Adrenal gland (tissue), 19 donors: ENCODE measurements at regions of chr7 and their contacts with region 1.

Region 1: GRCh38 chr7:152699121-152699660 is 23.2 kb upstream of the XRCC2 start:
- DNase-seq: no peak
- H3K4me3 ChIP-seq: no peak overlapping the region
- H3K27ac ChIP-seq: no peak overlapping the region
- H3K4me1 ChIP-seq: no peaks in the 10 kb centered on the region
- H3K27me3 ChIP-seq: no peaks in the 10 kb centered on the region
- CTCF ChIP-seq: no peak
- POLR2A ChIP-seq: no peak

Region 2: DNA sequence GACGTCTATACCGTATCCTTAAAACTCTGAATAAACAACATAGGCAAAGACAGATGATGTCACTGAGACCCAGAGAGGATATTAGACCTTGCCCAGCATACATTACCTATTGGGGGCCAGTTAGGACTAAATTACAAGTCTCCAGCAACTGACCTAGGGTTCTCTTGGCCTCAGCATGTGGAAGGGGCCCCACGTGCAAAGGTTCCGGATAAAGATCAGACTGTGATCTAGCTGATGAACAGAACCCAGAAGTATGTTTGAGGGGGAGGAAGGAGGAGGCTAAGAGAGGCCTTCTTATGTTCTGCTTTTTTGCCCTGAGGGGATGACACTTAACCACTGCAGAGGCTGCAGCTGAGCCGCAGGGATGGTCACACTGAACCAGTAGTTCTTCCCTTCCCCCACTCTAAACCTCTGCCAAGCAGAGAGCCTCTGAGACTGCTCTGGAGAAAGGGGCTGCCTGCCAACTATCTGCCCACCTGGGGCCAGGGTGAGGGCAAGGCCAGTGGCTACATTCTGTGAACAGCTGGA is 239.4 kb before region 1 on chr7:
- intact Hi-C with region 1: loop called in 1 of 2 experiments (anchors 10 kb)
- DNase-seq: peak; percentile 43 to 86 (median 70)
- H3K4me3 ChIP-seq: no peak overlapping the region
- H3K27ac ChIP-seq: peak overlapping the region in 3 of 5 donors; percentile 18 to 56 (median 50)
- H3K4me1 ChIP-seq: peaks cover 14 to 20% of the 10 kb centered on the region in 2 donors
- H3K27me3 ChIP-seq: no peaks in the 10 kb centered on the region
- CTCF ChIP-seq: no peak
- POLR2A ChIP-seq: no peak

Region 3: DNA sequence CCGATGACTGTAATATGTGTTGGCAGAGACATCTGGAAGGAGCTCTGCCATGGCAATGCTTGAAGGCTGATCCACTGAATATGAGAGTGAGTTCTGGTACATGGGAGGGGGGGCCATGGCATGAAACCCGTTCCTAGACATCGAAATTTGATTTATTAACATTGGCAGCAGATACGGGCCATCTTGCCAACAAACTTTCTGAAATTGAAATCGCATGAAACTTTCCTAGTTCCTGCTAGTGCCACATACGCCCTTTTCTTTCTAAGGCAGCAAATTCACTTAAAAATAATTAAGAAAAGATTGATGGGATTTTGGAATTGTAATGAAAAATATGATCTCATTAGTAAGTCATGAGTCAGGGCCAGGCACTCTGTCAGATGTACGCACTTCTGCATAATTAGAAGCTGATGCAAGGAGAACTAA is 171.6 kb before region 1 on chr7:
- intact Hi-C with region 1: no loop called
- DNase-seq: peak; percentile 59 to 87 (median 76)
- H3K4me3 ChIP-seq: peak overlapping the region in 1 of 4 donors; percentile 29
- H3K27ac ChIP-seq: peak overlapping the region in 1 of 5 donors; percentile 8
- H3K4me1 ChIP-seq: peaks cover 10 to 11% of the 10 kb centered on the region in 2 donors
- H3K27me3 ChIP-seq: no peaks in the 10 kb centered on the region
- CTCF ChIP-seq: no peak
- POLR2A ChIP-seq: no peak